ENCODE measurements at regions of chr3 and their contacts with region 1.

Region 1: DNA sequence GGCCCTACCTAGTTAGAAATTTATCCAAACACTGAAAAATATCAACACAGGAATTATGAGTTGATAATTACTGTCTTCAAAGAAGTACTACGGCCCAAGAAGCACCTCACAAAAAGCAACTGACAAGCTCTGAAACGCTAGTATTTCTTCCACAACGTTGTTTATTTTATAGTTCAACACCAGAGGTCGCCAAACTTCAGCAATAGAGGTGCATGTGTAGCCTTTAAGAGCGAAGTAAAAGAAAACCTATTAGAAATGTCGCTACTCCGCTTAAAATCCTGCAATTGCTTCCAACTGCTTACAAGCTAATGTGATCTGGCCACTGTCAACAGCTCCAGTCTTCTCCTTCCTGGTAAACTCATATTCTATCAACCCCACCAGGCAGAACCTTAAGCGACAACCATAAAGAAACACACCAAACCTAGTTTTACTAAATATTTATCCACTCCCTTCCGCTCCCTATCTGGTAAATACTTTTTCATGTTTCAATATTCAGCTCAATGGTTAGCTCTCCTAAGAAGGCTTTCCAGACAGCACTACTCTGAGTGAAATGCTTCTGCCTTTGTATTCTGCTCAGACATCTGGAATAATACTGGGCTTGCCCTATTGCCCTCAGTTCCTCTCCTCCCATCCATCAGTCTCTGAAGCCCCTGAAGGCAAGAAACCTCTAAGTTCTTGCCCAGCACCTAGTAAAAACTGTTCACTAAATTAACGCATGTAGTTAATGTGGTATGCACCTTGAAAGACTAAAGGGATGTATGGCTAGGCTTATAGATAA is 110.2 kb downstream of the NR1I2 start:
- DNase-seq: peak; percentile 80
- H3K4me3 ChIP-seq: no peak overlapping the region
- H3K27ac ChIP-seq: no peak overlapping the region
- H3K4me1 ChIP-seq: peaks cover 4% of the 10 kb centered on the region
- H3K27me3 ChIP-seq: no peaks in the 10 kb centered on the region
- CTCF ChIP-seq: peak; percentile 45 to 66
- POLR2A ChIP-seq: no peak

Region 2: DNA sequence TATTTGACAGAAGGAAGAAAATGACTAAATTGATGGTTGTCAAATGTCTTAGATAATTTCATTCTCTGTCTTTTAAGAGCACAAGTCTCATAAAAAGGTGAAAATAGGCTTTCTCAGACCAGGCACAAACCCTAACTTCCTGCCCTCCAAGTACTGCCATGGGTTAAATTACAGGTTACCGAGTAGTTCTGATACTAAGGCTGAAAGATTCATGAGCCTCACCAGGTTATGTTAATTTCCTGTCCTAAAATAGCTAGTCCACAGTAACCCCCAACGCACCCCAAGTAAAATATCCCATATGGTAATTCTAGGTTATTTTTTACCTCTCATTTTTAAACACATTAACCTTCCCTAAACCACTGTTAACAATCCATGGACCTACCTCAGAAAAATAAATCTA is 160.1 kb after region 1 on chr3:
- CTCF ChIA-PET with region 1: no interaction called
- POLR2A ChIA-PET with region 1: no interaction called
- dilution Hi-C with region 1: no loop called
- intact Hi-C with region 1: no loop called
- DNase-seq: no peak
- H3K4me3 ChIP-seq: no peak overlapping the region
- H3K27ac ChIP-seq: no peak overlapping the region
- H3K4me1 ChIP-seq: no peaks in the 10 kb centered on the region
- H3K27me3 ChIP-seq: no peaks in the 10 kb centered on the region
- CTCF ChIP-seq: no peak
- POLR2A ChIP-seq: no peak

Region 3: GRCh38 chr3:120147072-120147871 is 255.1 kb after region 1 on chr3:
- CTCF ChIA-PET with region 1: interaction called, 26 read pairs
- POLR2A ChIA-PET with region 1: no interaction called
- dilution Hi-C with region 1: no loop called
- intact Hi-C with region 1: no loop called
- DNase-seq: peak; percentile 25
- H3K4me3 ChIP-seq: no peak overlapping the region
- H3K27ac ChIP-seq: no peak overlapping the region
- H3K4me1 ChIP-seq: peaks cover 19% of the 10 kb centered on the region
- H3K27me3 ChIP-seq: no peaks in the 10 kb centered on the region
- CTCF ChIP-seq: peak in 1 of 2 donors; percentile 5
- POLR2A ChIP-seq: no peak

Region 4: GRCh38 chr3:120182724-120183524 is 290.8 kb after region 1 on chr3:
- CTCF ChIA-PET with region 1: interaction called, 24 read pairs
- POLR2A ChIA-PET with region 1: no interaction called
- dilution Hi-C with region 1: no loop called
- intact Hi-C with region 1: loop called (anchors 1 kb)
- DNase-seq: peak; percentile 55
- H3K4me3 ChIP-seq: no peak overlapping the region
- H3K27ac ChIP-seq: no peak overlapping the region
- H3K4me1 ChIP-seq: peaks cover 2% of the 10 kb centered on the region
- H3K27me3 ChIP-seq: no peaks in the 10 kb centered on the region
- CTCF ChIP-seq: peak; percentile 15 to 36
- POLR2A ChIP-seq: no peak

Region 5: GRCh38 chr3:120239644-120240043 is 347.5 kb after region 1 on chr3:
- CTCF ChIA-PET with region 1: interaction called, 14 read pairs
- POLR2A ChIA-PET with region 1: no interaction called
- dilution Hi-C with region 1: no loop called
- intact Hi-C with region 1: loop called (anchors 5 kb)
- DNase-seq: no peak
- H3K4me3 ChIP-seq: no peak overlapping the region
- H3K27ac ChIP-seq: no peak overlapping the region
- H3K4me1 ChIP-seq: no peaks in the 10 kb centered on the region
- H3K27me3 ChIP-seq: peaks cover 9 to 27% of the 10 kb centered on the region in 2 experiments
- CTCF ChIP-seq: no peak
- POLR2A ChIP-seq: no peak

Region 6: GRCh38 chr3:120299403-120299802 is 407.3 kb after region 1 on chr3:
- CTCF ChIA-PET with region 1: no interaction called
- POLR2A ChIA-PET with region 1: no interaction called
- dilution Hi-C with region 1: no loop called
- intact Hi-C with region 1: no loop called
- DNase-seq: no peak
- H3K4me3 ChIP-seq: no peak overlapping the region
- H3K27ac ChIP-seq: no peak overlapping the region
- H3K4me1 ChIP-seq: no peaks in the 10 kb centered on the region
- H3K27me3 ChIP-seq: no peaks in the 10 kb centered on the region
- CTCF ChIP-seq: no peak
- POLR2A ChIP-seq: no peak

Region 7: GRCh38 chr3:120417272-120417911 is 525.3 kb after region 1 on chr3:
- CTCF ChIA-PET with region 1: interaction called, 20 read pairs
- POLR2A ChIA-PET with region 1: no interaction called
- dilution Hi-C with region 1: no loop called
- intact Hi-C with region 1: loop called (anchors 1 kb)
- DNase-seq: peak; percentile 100
- H3K4me3 ChIP-seq: peak overlapping the region in 2 of 3 experiments; percentile 12 to 24
- H3K27ac ChIP-seq: peak overlapping the region; percentile 75
- H3K4me1 ChIP-seq: peaks cover 29% of the 10 kb centered on the region
- H3K27me3 ChIP-seq: no peaks in the 10 kb centered on the region
- CTCF ChIP-seq: peak; percentile 79 to 96
- POLR2A ChIP-seq: no peak

Measured in endothelial cell of umbilical vein (primary cell).